MCF 10A (cell line): ENCODE measurements at regions of chr6 and their contacts with region 1.

Region 1: DNA sequence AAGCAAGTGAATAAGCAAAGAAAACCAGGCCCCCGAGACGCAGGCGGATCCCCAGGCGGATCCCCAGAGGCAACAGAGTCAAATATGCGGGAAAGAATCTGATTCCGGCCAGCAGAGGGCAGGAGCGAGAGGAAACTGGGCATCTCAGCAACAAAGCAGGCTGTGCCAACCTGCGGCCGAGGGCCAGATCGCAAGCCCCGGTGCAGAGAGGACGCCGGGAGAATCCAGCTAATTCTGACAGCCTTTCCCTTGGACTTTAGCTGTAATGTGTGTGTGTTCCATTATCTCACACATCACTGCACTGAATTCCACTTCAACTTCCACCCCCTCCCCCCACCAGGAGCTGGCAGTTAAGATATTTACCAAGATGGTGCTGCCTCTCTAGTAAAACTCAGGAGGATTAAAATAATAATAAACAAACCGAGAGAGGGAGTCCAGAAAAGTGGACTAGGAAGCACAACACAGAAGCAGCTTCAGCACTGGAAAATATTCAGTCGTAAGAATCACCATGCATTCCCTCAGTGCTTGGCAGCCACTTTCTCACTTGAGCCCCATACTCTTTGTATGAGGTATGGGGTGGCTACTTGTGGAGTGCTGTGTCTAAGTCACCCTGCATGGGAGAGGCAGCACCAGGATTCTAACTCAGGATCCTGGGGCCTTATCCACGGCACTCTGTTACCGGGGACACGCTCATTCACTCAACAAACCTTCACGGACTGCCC is 66.2 kb upstream of the SNX9 start:
- DNase-seq: peak; percentile 87
- H3K4me3 Mint-ChIP-seq: no peak overlapping the region
- H3K27ac Mint-ChIP-seq: no peak overlapping the region
- H3K4me1 Mint-ChIP-seq: peaks cover 51% of the 10 kb centered on the region
- H3K27me3 Mint-ChIP-seq: no peaks in the 10 kb centered on the region
- CTCF ChIP-seq: peak; percentile 73

Region 2: DNA sequence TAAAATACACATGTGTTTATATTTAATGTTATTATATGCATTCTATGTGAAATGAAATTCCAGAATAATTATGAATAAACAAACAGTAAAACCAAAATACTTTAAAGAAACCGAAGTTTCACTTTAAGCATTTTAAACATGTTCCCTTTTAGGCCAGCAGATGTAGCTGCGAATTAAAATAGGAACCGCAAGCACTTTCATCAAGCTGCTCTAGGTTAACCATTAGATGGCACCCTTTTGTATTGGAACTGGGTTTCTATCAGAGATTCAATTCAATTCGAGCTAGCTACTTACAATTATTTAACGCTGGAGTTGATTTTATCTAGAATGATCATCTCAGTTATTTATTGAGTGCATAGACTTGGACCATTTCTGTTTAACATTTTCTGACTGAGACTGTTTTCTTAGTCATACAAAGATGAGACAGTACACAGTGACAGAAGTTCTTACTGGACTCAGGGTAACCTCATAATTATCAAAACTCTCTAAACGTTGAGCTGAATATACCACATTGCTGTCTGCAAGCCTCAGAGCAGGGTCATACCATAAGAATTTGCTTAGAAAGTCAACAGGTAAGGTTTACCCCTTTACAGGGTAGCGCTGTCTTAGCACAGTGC is 442.1 kb before region 1 on chr6:
- CTCF ChIA-PET with region 1: interaction called, 9 read pairs
- POLR2A ChIA-PET with region 1: no interaction called
- intact Hi-C with region 1: loop called (anchors 10 kb)
- DNase-seq: peak; percentile 76
- H3K4me3 Mint-ChIP-seq: no peak overlapping the region
- H3K27ac Mint-ChIP-seq: no peak overlapping the region
- H3K4me1 Mint-ChIP-seq: peaks cover 12% of the 10 kb centered on the region
- H3K27me3 Mint-ChIP-seq: no peaks in the 10 kb centered on the region
- CTCF ChIP-seq: peak; percentile 79

Region 3: DNA sequence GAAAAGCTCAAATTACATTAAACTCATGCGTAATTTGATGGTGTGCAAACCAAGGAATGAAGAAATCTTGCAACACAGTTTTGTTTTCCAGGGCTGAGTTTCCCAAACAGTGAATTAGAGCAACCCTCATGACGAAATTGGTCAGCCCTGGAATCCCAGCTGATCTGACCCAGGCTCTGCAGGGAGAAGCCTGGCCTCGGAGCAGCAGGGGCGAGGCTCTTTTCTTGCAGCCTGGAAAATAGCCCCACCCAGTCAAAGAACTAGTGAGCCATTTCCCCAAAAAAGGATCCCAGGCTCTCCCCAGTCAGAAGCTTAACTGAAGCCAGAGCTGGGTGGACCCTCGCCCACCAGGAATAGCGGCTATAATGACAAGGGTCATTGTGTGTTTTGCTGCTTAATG is 41.1 kb before region 1 on chr6:
- CTCF ChIA-PET with region 1: interaction called, 44 read pairs
- POLR2A ChIA-PET with region 1: interaction called, 15 read pairs
- intact Hi-C with region 1: no loop called
- DNase-seq: peak; percentile 98
- H3K4me3 Mint-ChIP-seq: peak overlapping the region; percentile 70
- H3K27ac Mint-ChIP-seq: peak overlapping the region; percentile 100
- H3K4me1 Mint-ChIP-seq: peaks cover 42% of the 10 kb centered on the region
- H3K27me3 Mint-ChIP-seq: no peaks in the 10 kb centered on the region
- CTCF ChIP-seq: no peak

Region 4: GRCh38 chr6:157830354-157831017 is 73.6 kb after region 1 on chr6:
- CTCF ChIA-PET with region 1: interaction called, 31 read pairs
- POLR2A ChIA-PET with region 1: interaction called, 79 read pairs
- intact Hi-C with region 1: no loop called
- DNase-seq: no peak
- H3K4me3 Mint-ChIP-seq: no peak overlapping the region
- H3K27ac Mint-ChIP-seq: no peak overlapping the region
- H3K4me1 Mint-ChIP-seq: peaks cover 41% of the 10 kb centered on the region
- H3K27me3 Mint-ChIP-seq: no peaks in the 10 kb centered on the region
- CTCF ChIP-seq: no peak

Region 5: DNA sequence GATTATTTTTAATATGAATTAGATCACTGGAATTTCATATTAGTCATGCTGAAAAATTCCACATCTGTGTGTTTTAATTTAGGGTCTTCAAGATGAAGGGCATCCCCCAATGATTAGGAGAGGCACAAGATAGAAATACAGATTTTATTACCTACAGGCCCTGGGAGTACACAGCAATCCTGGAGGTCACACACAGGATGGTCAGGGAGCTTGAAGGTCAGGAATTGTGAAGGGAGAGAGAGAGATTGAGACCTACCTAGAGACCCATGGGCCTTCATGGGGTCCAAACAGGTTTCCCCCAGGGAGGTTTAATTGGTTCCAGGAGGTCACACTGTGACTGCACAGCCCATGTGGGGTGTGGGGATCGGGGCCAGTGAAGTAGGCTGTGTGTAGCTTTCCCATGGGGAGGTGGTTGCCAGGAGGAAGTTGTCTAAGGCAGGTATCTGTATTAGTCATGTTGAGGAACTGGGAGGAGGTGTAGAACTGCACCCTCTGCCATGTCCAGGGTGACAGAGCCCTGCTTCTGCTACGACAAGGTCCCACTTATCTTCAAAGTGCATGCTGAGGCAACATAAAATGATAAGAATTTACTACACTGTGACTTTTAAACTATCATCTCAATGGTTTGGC is 84.5 kb after region 1 on chr6:
- CTCF ChIA-PET with region 1: interaction called, 10 read pairs
- POLR2A ChIA-PET with region 1: interaction called, 46 read pairs
- intact Hi-C with region 1: no loop called
- DNase-seq: peak; percentile 76
- H3K4me3 Mint-ChIP-seq: no peak overlapping the region
- H3K27ac Mint-ChIP-seq: peak overlapping the region; percentile 8
- H3K4me1 Mint-ChIP-seq: peaks cover 50% of the 10 kb centered on the region
- H3K27me3 Mint-ChIP-seq: no peaks in the 10 kb centered on the region
- CTCF ChIP-seq: no peak

Region 6: DNA sequence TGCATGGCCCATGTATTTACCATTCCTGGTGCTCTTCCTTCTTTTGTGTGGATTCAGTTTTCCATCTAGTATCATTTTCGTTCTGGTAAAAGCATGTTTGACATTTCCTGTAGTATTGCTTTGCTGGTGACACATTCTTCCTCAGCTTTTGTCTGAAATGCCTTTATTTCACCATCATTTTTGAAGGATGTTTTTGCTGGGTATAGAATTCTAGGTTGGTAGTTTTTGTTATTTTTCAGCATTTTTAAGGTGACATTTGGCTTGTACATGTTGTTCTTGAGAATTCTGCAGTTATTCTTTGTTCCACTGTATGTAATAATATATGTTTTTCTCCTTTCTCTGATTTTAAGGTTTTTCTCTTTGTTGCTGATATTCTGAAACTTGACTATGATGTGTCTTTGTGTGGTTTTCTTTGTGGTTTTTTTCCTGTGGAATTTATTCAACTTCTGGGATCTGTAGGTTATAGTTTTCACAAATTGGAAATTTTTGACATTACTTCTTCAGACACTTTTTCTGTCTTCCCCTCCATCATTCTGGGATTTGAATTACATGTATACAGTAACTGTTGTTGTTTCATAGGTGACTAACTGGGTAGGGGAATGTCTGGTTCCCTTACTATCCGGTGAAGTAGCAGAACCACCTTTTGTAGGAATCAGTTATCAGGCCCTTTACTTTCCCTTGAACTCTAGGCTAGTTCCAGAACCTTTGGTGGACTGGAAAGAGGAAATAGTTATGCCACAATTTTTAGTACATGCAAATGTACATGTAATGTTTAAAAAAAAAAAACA is 96.3 kb after region 1 on chr6:
- CTCF ChIA-PET with region 1: interaction called, 10 read pairs
- POLR2A ChIA-PET with region 1: no interaction called
- intact Hi-C with region 1: no loop called
- DNase-seq: no peak
- H3K4me3 Mint-ChIP-seq: no peak overlapping the region
- H3K27ac Mint-ChIP-seq: no peak overlapping the region
- H3K4me1 Mint-ChIP-seq: peaks cover 19% of the 10 kb centered on the region
- H3K27me3 Mint-ChIP-seq: no peaks in the 10 kb centered on the region
- CTCF ChIP-seq: no peak

Region 7: GRCh38 chr6:157873735-157874344 is 117.0 kb after region 1 on chr6:
- CTCF ChIA-PET with region 1: interaction called, 138 read pairs
- POLR2A ChIA-PET with region 1: interaction called, 7 read pairs
- intact Hi-C with region 1: loop called (anchors 1 kb)
- DNase-seq: peak; percentile 80
- H3K4me3 Mint-ChIP-seq: no peak overlapping the region
- H3K27ac Mint-ChIP-seq: no peak overlapping the region
- H3K4me1 Mint-ChIP-seq: no peaks in the 10 kb centered on the region
- H3K27me3 Mint-ChIP-seq: no peaks in the 10 kb centered on the region
- CTCF ChIP-seq: peak; percentile 75